Activated naive CD8-positive, alpha-beta T cell treated with anti-CD3 and anti-CD28 coated beads, Interleukin-2, amount 10 ng/mL, durations not matched to agents 7 days and 5 days (primary cell): ENCODE measurements at regions of chr11 and their contacts with region 1.

Region 1: GRCh38 chr11:75328426-75329277 is 22.8 kb downstream of the ARRB1 start:
- DNase-seq: peak; percentile 66
- ATAC-seq: peak; percentile 93
- H3K4me3 Mint-ChIP-seq: peak overlapping the region; percentile 54
- H3K27ac Mint-ChIP-seq: peak overlapping the region; percentile 89
- H3K4me1 Mint-ChIP-seq: peaks cover 59% of the 10 kb centered on the region
- H3K27me3 Mint-ChIP-seq: no peaks in the 10 kb centered on the region

Region 2: GRCh38 chr11:75275581-75275980 is 53.1 kb before region 1 on chr11:
- POLR2A ChIA-PET with region 1: interaction called, 11 read pairs
- DNase-seq: peak; percentile 67
- ATAC-seq: peak; percentile 98
- H3K4me3 Mint-ChIP-seq: peak overlapping the region; percentile 80
- H3K27ac Mint-ChIP-seq: peak overlapping the region; percentile 99
- H3K4me1 Mint-ChIP-seq: peaks cover 38% of the 10 kb centered on the region
- H3K27me3 Mint-ChIP-seq: no peaks in the 10 kb centered on the region

Region 3: DNA sequence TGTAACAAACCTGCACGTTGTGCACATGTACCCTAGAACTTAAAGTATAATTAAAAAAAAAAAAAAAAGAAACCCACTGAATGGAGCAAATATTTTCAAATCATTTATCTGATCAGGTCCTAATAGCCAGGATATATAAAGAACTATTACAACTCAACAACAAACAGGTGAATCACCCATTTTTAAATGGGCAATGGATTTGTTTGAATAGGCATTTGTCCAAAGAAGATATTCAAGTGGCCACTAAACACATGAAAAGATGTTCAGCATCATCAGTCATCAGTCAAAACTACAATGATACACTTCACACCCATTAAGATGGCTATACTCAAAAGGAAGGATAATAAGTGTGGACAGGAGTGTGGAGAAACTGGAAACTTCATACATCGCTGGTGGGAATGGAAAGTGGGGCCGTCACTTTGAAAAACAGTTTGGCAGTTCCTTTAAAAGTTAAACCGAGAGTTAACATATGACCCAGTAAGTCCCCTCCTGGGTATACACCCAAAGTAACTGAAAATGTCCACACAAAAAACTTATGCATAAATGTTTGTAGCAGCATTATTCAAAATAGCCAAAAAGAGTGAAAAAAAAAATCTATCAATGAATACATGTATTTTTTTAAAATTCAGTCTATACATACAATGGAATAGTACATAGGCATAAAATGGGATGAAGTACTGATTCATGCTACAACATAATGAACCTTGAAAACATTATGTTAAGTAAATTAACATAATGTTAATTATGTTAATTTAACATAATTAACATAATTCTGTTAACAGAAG is 30.3 kb before region 1 on chr11:
- POLR2A ChIA-PET with region 1: no interaction called
- DNase-seq: no peak
- ATAC-seq: no peak
- H3K4me3 Mint-ChIP-seq: no peak overlapping the region
- H3K27ac Mint-ChIP-seq: no peak overlapping the region
- H3K4me1 Mint-ChIP-seq: peaks cover 5% of the 10 kb centered on the region
- H3K27me3 Mint-ChIP-seq: no peaks in the 10 kb centered on the region

Region 4: DNA sequence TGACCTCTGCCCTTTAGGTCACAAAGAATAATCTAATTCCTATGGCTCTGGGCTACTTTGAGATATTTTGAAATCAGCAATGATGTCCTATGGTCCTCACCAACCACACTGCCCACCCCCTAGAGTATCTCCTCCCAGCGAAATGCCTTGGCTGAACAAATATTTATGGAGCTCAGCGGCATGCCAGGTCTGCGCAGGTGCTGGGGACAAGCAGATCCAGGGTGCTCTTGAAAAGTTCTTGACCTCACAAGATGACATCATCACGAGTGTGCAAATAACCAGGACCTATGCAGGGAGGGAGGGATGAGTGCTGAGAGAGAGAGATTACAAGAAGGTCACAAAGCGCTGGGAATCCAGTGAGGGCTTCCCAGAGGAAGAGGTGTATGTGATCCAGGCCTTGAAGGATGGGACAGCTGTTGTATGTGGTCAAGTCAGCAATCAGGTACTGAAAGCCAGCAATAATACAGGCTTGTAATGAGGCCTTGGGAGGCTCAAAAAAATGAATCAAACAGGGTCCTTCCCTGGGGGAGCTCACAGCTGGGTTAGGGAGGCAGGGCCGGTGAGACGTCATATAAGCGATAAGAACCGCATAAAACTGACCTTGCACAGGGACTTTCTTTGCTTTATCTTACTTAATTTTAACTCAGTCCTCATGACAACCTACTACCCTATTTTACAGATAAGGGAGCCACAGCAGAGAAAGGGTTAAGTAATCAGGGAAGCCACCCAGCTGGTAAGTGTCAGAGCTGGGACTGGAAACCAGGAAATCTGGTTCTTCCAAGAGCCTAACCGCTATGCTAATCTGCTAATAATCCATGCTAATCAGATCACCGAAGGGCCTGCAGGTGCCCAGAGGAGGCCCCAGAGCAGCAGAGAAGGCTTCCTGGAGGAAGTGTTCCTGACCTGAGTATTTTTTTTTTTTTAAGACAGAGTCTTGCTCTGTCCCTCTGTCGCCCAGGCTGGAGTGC is 14.5 kb after region 1 on chr11:
- POLR2A ChIA-PET with region 1: interaction called, 17 read pairs
- DNase-seq: no peak
- ATAC-seq: no peak
- H3K4me3 Mint-ChIP-seq: no peak overlapping the region
- H3K27ac Mint-ChIP-seq: peak overlapping the region; percentile 75
- H3K4me1 Mint-ChIP-seq: peaks cover 76% of the 10 kb centered on the region
- H3K27me3 Mint-ChIP-seq: no peaks in the 10 kb centered on the region

Region 5: GRCh38 chr11:75351791-75352587 is 23.3 kb after region 1 on chr11:
- POLR2A ChIA-PET with region 1: interaction called, 34 read pairs
- DNase-seq: peak; percentile 78
- ATAC-seq: peak; percentile 68
- H3K4me3 Mint-ChIP-seq: peak overlapping the region; percentile 96
- H3K27ac Mint-ChIP-seq: peak overlapping the region; percentile 98
- H3K4me1 Mint-ChIP-seq: peaks cover 52% of the 10 kb centered on the region
- H3K27me3 Mint-ChIP-seq: no peaks in the 10 kb centered on the region

Region 6: DNA sequence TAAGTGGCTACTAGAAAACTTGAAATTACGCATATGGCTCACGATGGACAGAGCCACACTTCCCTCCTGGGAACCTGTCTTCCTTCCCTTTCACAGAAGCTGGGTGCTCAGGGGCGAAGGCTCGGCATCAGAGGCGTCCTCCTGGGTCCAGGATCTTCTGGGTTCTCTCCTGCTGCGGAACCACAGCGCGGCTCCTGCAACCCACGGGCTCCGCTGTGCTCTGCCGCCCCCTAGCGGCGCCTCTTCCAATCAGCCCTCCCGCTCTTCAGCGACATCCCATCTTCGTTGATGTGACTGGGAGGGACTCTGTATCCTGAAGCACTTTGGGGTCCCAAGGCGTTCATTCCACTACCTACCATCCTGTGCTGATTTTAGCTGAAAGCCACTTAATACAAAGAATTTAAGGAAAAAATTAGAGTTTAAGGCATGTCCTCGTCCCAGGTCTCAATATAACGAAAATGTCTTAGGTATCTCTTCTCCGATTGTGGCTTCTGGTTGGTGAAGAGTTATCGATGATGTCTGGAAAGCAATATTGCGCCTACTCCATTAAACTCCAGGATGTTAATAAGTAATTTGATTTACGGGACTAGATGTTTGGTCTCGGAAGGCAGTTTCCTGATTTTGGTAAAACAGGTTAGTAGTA is 55.9 kb after region 1 on chr11:
- POLR2A ChIA-PET with region 1: interaction called, 12 read pairs
- DNase-seq: peak; percentile 89
- ATAC-seq: peak; percentile 75
- H3K4me3 Mint-ChIP-seq: peak overlapping the region; percentile 66
- H3K27ac Mint-ChIP-seq: peak overlapping the region; percentile 90
- H3K4me1 Mint-ChIP-seq: peaks cover 22% of the 10 kb centered on the region
- H3K27me3 Mint-ChIP-seq: peaks cover 9% of the 10 kb centered on the region